Activated CD4-positive, alpha-beta T cell treated with anti-CD3 and anti-CD28 coated beads, Interleukin-2, amount 10 ng/mL, durations not matched to agents 7 days and 5 days (primary cell): ENCODE measurements at regions of chr11 and their contacts with region 1.

Region 1: GRCh38 chr11:79834015-79834414 is 393.2 kb upstream of the TENM4 start:
- DNase-seq: no peak
- H3K4me3 Mint-ChIP-seq: no peak overlapping the region
- H3K27ac Mint-ChIP-seq: no peak overlapping the region
- H3K4me1 Mint-ChIP-seq: no peaks in the 10 kb centered on the region
- H3K27me3 Mint-ChIP-seq: no peaks in the 10 kb centered on the region

Region 2: GRCh38 chr11:80987171-80987570 is 1153.2 kb after region 1 on chr11:
- CTCF ChIA-PET with region 1: no interaction called
- POLR2A ChIA-PET with region 1: interaction called, 12 read pairs
- DNase-seq: no peak
- H3K4me3 Mint-ChIP-seq: no peak overlapping the region
- H3K27ac Mint-ChIP-seq: no peak overlapping the region
- H3K4me1 Mint-ChIP-seq: no peaks in the 10 kb centered on the region
- H3K27me3 Mint-ChIP-seq: no peaks in the 10 kb centered on the region